ENCODE measurements at regions of chr11 and their contacts with region 1.

Region 1: DNA sequence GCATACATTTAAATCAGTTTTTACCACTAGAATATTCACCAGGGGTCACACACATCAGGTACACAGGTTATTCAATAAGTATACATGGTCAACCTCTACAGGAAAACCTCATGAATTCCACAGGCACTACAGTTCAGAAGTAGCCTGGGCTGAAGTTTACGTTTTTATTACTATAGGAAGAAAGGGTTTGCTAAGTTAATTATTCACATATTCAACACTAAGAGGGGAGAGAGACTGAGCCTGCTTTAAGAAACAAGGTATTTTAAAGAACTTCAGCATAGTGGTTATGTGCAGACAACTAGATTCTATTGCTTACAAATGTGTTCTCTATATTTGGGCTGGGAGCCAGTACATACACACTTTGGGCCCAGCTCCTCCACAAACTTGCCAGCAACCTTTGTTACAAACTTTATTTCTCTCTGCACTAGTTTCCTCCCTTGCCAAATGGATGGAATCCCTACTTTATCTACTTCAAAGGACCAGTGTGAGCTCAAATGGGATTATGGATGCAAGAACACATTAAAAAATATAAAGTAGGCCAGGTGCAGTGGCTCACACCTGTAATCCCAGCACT is 31.9 kb downstream of the IL18BP start:
- DNase-seq: no peak
- H3K4me3 Mint-ChIP-seq: no peak overlapping the region
- H3K27ac Mint-ChIP-seq: no peak overlapping the region
- H3K4me1 Mint-ChIP-seq: peaks cover 20% of the 10 kb centered on the region
- H3K27me3 Mint-ChIP-seq: no peaks in the 10 kb centered on the region

Region 2: DNA sequence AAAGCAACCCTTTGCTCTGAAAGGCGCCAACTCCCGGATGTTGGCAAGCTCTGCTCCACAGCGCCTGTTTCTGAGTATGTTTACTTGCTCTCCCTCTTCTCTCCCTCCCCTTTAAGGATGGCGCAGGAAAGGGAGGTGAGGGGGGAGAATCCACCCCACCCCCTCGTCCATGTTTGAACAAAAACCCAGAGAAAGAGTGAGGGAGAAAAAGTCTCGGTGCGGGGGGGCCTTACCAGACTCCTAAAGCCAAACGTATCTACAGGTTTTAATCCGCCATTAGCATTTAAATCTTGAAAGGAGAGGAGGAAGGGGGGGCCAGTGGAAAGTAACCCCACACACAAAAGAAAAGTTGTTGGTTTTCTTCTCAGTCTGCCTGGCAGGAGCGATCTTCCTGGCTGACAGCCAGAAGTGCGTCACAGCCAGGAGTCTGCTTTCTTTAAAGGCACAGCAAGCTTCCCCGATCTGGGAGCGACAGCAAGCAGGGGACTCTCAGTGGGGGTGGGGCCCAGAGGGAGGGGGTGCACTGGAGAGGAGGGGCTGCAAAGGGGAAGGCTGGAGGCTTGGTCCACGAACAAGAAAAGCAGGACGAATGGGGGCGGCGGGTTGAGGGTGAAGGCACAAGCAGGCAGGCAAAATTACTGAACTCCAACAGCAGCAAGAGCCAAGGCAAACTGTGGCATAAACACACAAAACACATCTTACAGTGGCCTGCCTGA is 10.3 kb after region 1 on chr11:
- CTCF ChIA-PET with region 1: interaction called, 36 read pairs
- DNase-seq: peak; percentile 84
- H3K4me3 Mint-ChIP-seq: no peak overlapping the region
- H3K27ac Mint-ChIP-seq: no peak overlapping the region
- H3K4me1 Mint-ChIP-seq: peaks cover 22% of the 10 kb centered on the region
- H3K27me3 Mint-ChIP-seq: no peaks in the 10 kb centered on the region

Region 3: DNA sequence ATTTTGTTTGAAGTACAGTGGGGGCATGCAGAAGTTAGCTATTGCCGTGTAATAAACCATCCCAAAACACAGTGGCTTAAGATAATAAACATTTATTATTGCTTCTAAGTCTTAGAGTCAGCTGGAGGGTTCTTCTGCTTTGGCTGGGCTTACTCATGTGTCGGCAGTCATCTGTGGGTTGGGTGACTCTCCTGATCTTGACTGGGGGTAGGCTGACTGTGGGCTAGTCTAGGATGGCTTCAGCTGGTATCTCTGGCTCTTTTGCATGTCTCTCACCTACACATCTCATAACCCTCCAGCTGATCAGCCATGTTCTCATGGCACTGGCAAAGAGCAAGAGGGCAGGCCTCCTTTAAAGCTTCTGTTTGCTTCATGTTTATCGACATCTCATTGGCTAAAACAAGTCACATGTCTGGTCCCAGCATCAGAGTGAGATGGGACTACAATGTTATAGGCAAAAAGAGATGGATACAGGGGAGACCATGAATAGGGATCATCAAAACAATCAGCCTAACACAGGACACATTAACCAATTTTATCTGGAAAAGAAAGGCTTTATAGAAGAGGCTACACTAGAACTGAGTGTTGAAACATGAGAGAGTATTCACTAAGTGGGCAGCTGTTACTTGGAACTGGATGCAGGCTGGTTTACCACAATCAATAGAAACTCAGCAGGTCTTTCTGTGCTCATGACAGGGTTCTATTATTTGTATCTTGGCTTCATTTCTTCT is 55.2 kb after region 1 on chr11:
- CTCF ChIA-PET with region 1: interaction called, 156 read pairs
- DNase-seq: no peak
- H3K4me3 Mint-ChIP-seq: no peak overlapping the region
- H3K27ac Mint-ChIP-seq: no peak overlapping the region
- H3K4me1 Mint-ChIP-seq: peaks cover 27% of the 10 kb centered on the region
- H3K27me3 Mint-ChIP-seq: no peaks in the 10 kb centered on the region

Region 4: GRCh38 chr11:72144807-72145560 is 114.4 kb after region 1 on chr11:
- CTCF ChIA-PET with region 1: interaction called, 64 read pairs
- DNase-seq: no peak
- H3K4me3 Mint-ChIP-seq: no peak overlapping the region
- H3K27ac Mint-ChIP-seq: no peak overlapping the region
- H3K4me1 Mint-ChIP-seq: no peaks in the 10 kb centered on the region
- H3K27me3 Mint-ChIP-seq: peaks cover 33% of the 10 kb centered on the region